GM12878 (cell line): ENCODE measurements at regions of chr12 and their contacts with region 1.

Region 1: GRCh38 chr12:94149119-94149780 is 873 bp downstream of the PLXNC1 start:
- DNase-seq: no peak
- ATAC-seq: peak; percentile 50
- H3K4me3 ChIP-seq: peak overlapping the region; percentile 91
- H3K27ac ChIP-seq: peak overlapping the region; percentile 70
- H3K4me1 ChIP-seq: peaks cover 13% of the 10 kb centered on the region
- H3K27me3 ChIP-seq: no peaks in the 10 kb centered on the region
- CTCF ChIP-seq: peak; percentile 49 to 86 (median 70); a peak in 5 of 6 replicates
- EP300 ChIP-seq: no peak
- POLR2A ChIP-seq: peak; percentile 66
- RAD21 ChIP-seq: peak; percentile 60

Region 2: GRCh38 chr12:94133964-94134795 is 15.1 kb before region 1 on chr12:
- CTCF ChIA-PET with region 1: interaction called, 51 read pairs
- POLR2A ChIA-PET with region 1: no interaction called
- RAD21 ChIA-PET with region 1: interaction called, 12 read pairs
- SMC1A ChIA-PET with region 1: interaction called, 35 read pairs
- in situ Hi-C with region 1: no loop called
- intact Hi-C with region 1: no loop called
- DNase-seq: no peak
- ATAC-seq: peak; percentile 97
- H3K4me3 ChIP-seq: no peak overlapping the region
- H3K27ac ChIP-seq: no peak overlapping the region
- H3K4me1 ChIP-seq: no peaks in the 10 kb centered on the region; the same call in 1 of the 2 replicates
- H3K27me3 ChIP-seq: no peaks in the 10 kb centered on the region
- CTCF ChIP-seq: peak; percentile 66 to 73 (median 70)
- EP300 ChIP-seq: no peak
- POLR2A ChIP-seq: no peak
- RAD21 ChIP-seq: peak; percentile 83

Region 3: DNA sequence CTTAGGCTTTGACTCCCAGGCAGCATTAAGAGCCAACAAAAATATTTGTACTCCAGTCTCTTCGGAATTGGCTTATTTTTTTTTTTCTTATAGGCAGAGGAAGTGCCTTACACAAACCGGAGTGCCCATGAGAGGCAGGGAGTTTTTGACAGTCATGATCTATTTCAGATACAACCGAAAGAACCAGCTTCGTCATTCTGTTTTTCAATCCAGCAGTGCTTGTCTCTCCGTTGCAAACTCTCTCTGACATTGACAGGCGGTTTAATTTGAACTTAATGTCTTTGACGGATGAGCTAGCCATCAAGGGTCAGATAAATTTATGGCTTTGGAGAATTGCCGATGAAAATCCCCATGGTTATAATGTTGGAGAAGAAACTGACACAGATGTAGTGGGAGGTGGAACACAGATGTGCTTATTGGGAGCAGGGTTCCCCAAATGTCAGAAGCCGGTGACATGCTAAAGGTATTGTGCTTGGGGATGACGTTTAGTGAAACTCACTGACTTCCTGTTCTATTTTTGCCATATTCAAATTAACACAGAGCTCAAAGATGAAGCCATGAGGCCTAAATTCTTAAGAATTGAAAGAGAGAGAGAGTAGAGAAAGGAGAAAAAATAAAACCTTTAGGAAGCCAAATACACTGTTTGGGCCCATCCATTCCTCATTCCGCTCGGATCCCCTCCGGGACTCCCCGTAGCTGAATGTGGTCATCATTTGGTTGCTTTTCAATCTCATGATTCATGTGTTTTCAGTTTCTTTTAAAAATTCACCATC is 58.8 kb after region 1 on chr12:
- CTCF ChIA-PET with region 1: interaction called, 16 read pairs
- POLR2A ChIA-PET with region 1: interaction called, 51 read pairs
- RAD21 ChIA-PET with region 1: interaction called, 113 read pairs
- SMC1A ChIA-PET with region 1: interaction called, 238 read pairs
- in situ Hi-C with region 1: no loop called
- intact Hi-C with region 1: loop called (anchors 2 kb)
- DNase-seq: peak; percentile 89
- ATAC-seq: peak; percentile 78
- H3K4me3 ChIP-seq: peak overlapping the region; percentile 58
- H3K27ac ChIP-seq: peak overlapping the region; percentile 100
- H3K4me1 ChIP-seq: peaks cover 47% of the 10 kb centered on the region
- H3K27me3 ChIP-seq: no peaks in the 10 kb centered on the region
- CTCF ChIP-seq: no peak
- EP300 ChIP-seq: peak in 1 of 2 experiments; percentile 77; a peak in 3 of 4 replicates
- POLR2A ChIP-seq: no peak; the same call in 1 of the 2 replicates
- RAD21 ChIP-seq: no peak; the same call in 1 of the 2 replicates

Region 4: DNA sequence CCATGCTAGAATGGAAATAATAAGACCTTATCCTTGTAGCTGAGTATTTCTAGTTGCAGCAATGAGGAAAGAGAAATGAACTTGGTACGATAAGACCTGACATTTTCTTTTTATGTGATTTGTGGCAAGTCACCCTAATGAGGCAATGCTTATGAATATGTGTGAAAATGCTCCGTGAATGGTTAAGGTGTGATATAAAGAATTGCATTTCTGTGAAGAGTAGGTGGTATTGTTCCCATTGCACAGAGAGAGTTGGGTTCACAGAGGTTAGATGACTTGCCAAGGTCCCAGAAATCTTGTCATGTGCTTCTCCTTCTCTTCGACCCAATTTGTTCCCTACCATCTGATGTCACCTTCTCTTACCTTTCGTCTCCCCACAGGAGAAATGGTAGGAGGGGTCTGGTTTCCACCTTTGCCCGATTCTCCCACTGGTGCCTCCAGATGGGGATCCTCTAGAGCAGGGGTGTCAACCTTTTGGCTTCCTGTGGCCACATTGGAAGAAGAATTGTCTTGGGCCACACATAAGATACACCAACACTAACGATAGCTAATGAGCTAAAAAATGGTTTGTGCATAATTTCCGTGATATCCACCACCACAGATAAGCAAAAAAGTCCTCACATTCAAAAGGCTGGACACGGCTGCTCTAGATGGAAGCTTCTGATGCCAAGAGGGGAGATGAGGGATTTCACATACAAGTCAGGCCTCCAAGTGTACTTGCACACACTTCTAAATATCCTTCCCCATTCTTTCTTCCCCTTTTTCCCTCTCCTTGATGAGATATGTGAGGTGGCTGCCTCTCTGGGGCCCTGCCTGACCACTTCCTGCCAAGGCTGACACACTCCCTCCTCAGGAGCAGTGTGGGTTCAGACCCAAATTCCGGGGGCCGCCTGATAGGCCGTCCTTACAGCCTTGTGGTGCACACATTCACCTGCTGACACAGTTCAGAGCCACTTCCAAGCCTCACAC is 95.2 kb after region 1 on chr12:
- CTCF ChIA-PET with region 1: interaction called, 8 read pairs
- POLR2A ChIA-PET with region 1: interaction called, 6 read pairs
- RAD21 ChIA-PET with region 1: interaction called, 15 read pairs
- SMC1A ChIA-PET with region 1: interaction called, 13 read pairs
- in situ Hi-C with region 1: no loop called
- intact Hi-C with region 1: no loop called
- DNase-seq: no peak
- ATAC-seq: peak; percentile 86
- H3K4me3 ChIP-seq: no peak overlapping the region
- H3K27ac ChIP-seq: peak overlapping the region; percentile 41
- H3K4me1 ChIP-seq: peaks cover 37% of the 10 kb centered on the region
- H3K27me3 ChIP-seq: no peaks in the 10 kb centered on the region
- CTCF ChIP-seq: no peak
- EP300 ChIP-seq: peak in 1 of 2 experiments; percentile 63; a peak in 1 of 4 replicates
- POLR2A ChIP-seq: no peak; the same call in 1 of the 2 replicates
- RAD21 ChIP-seq: no peak

Region 5: DNA sequence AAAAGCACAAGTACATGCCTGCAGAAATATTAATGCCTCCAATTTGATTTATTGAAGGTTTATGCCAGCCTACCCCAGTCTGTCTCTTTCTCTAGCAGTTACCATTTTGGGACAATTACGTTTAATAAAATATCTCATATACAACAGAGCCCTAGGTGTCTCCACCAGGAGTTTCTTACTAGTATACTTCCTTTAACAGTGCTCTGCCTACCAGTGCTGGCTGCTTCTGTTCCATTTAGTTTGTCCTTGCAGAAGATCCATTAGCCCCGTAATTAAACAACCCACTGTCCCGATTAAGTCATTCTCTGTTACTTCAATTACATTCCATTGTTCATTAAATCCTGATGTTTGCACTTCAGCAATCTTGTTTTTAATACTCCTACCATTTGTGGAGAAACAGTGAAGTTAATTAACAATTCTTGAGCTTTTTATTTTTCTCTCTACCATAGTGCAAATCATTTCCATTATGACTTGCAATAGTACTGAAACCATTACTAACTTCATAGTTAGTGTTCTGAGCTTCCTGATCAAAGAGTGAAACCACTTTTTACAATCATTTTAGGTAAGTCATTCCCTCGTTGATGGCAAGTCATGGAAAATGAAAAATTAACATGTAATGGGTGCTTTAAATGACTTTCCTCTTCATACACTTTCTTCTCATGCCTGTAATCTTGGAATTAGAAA is 120.2 kb after region 1 on chr12:
- CTCF ChIA-PET with region 1: interaction called, 7 read pairs
- POLR2A ChIA-PET with region 1: interaction called, 3 read pairs
- RAD21 ChIA-PET with region 1: interaction called, 17 read pairs
- SMC1A ChIA-PET with region 1: interaction called, 18 read pairs
- in situ Hi-C with region 1: no loop called
- intact Hi-C with region 1: no loop called
- DNase-seq: no peak
- ATAC-seq: peak; percentile 66
- H3K4me3 ChIP-seq: no peak overlapping the region
- H3K27ac ChIP-seq: 0 out of 2 replicates have a peak overlapping the region, but pooled peaks have one; percentile 15
- H3K4me1 ChIP-seq: peaks cover 61% of the 10 kb centered on the region
- H3K27me3 ChIP-seq: no peaks in the 10 kb centered on the region
- CTCF ChIP-seq: no peak
- EP300 ChIP-seq: no peak
- POLR2A ChIP-seq: no peak
- RAD21 ChIP-seq: no peak

Region 6: GRCh38 chr12:94435511-94435927 is 286.3 kb after region 1 on chr12:
- CTCF ChIA-PET with region 1: interaction called, 9 read pairs
- POLR2A ChIA-PET with region 1: no interaction called
- RAD21 ChIA-PET with region 1: interaction called, 11 read pairs
- SMC1A ChIA-PET with region 1: interaction called, 19 read pairs
- in situ Hi-C with region 1: no loop called
- intact Hi-C with region 1: loop called (anchors 5 kb)
- DNase-seq: no peak
- ATAC-seq: peak; percentile 75
- H3K4me3 ChIP-seq: peak overlapping the region; percentile 12; the same call in 1 of the 2 replicates
- H3K27ac ChIP-seq: peak overlapping the region; percentile 65
- H3K4me1 ChIP-seq: peaks cover 11% of the 10 kb centered on the region
- H3K27me3 ChIP-seq: no peaks in the 10 kb centered on the region
- CTCF ChIP-seq: no peak
- EP300 ChIP-seq: no peak
- POLR2A ChIP-seq: no peak
- RAD21 ChIP-seq: no peak

Region 7: DNA sequence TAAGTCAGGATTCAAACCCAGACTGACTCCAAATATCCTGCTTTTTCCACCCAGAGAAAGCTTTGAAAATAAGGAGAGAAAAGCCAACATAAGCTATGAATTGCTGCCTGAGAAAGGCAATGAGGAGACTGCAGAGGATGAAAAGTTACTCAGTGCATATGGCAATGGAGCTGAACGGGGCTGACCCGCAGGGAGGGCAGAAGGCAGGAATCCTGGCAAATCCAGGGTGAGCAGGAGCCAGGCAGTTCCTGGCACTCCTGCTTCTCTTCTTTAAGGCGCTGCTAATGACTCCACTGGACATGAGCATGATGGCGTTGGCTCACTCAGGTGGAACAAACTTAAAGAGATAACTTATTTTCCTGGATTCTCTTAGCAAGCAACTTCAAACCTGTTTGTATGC is 596.3 kb after region 1 on chr12:
- CTCF ChIA-PET with region 1: no interaction called
- POLR2A ChIA-PET with region 1: no interaction called
- RAD21 ChIA-PET with region 1: no interaction called
- SMC1A ChIA-PET with region 1: no interaction called
- in situ Hi-C with region 1: no loop called
- intact Hi-C with region 1: no loop called
- DNase-seq: no peak
- ATAC-seq: no peak
- H3K4me3 ChIP-seq: no peak overlapping the region
- H3K27ac ChIP-seq: no peak overlapping the region
- H3K4me1 ChIP-seq: peaks cover 4% of the 10 kb centered on the region; the same call in 1 of the 2 replicates
- H3K27me3 ChIP-seq: no peaks in the 10 kb centered on the region
- CTCF ChIP-seq: no peak
- EP300 ChIP-seq: no peak
- POLR2A ChIP-seq: no peak
- RAD21 ChIP-seq: no peak